ENCODE measurements at regions of chr11 and their contacts with region 1.

Region 1: DNA sequence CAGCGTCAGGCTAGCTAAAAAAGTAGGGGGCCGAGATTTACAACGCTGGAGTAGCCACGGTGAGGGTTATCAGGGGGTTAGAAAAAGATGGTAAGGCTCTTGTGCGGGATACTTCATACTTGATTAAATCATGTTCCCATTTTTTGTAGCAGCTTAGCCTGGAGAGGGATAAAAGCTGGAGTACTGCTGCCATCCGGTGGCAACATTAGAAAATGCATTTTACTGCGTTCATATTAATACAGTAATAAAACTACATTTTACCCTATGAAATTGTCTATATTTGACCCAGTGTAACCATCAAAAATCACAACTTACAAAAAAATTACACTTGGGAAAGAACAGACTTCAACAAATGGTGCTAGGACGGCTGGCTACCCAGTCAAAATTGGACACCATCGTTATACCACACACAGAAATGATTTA is 17.3 kb downstream of the RPUSD4 start:
- DNase-seq: peak; percentile 80
- ATAC-seq: peak; percentile 71
- H3K4me3 ChIP-seq: no peak overlapping the region
- H3K27ac ChIP-seq: no peak overlapping the region
- H3K4me1 ChIP-seq: no peaks in the 10 kb centered on the region
- H3K27me3 ChIP-seq: no peaks in the 10 kb centered on the region
- CTCF ChIP-seq: peak; percentile 91

Region 2: DNA sequence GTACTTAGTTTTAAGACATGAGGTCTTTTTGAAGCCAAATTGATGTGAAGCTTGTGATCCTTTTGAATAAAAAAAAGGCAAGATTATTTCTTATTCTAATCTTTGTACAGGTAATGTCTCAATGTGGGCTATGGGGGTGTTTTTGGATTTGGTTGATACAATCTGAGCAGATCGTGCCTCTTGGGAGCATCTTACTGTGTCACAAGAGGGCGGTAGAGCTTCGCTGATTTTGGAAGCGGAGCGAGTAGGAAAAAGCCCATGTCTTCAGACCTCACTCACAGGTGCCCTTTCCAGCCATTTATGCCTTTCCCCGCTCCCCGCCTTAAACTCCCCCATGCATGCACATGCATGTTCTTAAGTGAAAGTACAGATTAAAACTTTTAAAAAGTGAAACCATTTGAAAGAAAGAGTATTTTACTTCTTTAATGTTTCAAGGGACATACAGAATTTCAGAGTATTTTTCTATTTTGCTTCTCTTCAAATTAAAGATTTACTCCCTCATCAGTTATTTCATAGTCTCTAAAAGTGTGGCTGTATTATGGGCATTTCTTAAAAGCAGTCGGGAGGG is 271.0 kb before region 1 on chr11:
- CTCF ChIA-PET with region 1: interaction called, 8 read pairs
- POLR2A ChIA-PET with region 1: no interaction called
- intact Hi-C with region 1: loop called (anchors 1 kb)
- DNase-seq: peak; percentile 94
- ATAC-seq: peak; percentile 86
- H3K4me3 ChIP-seq: no peak overlapping the region
- H3K27ac ChIP-seq: no peak overlapping the region
- H3K4me1 ChIP-seq: no peaks in the 10 kb centered on the region
- H3K27me3 ChIP-seq: peaks cover 6% of the 10 kb centered on the region; the same call in 1 of the 2 replicates
- CTCF ChIP-seq: peak; percentile 93

Region 3: GRCh38 chr11:125941619-125942611 is 252.2 kb before region 1 on chr11:
- CTCF ChIA-PET with region 1: interaction called, 3 read pairs
- POLR2A ChIA-PET with region 1: no interaction called
- intact Hi-C with region 1: loop called (anchors 1 kb)
- DNase-seq: peak; percentile 72
- ATAC-seq: peak; percentile 90
- H3K4me3 ChIP-seq: no peak overlapping the region
- H3K27ac ChIP-seq: no peak overlapping the region
- H3K4me1 ChIP-seq: peaks cover 6% of the 10 kb centered on the region; the same call in 1 of the 2 replicates
- H3K27me3 ChIP-seq: no peaks in the 10 kb centered on the region
- CTCF ChIP-seq: peak; percentile 96

Region 4: GRCh38 chr11:126115816-126116331 is 78.3 kb before region 1 on chr11:
- CTCF ChIA-PET with region 1: no interaction called
- POLR2A ChIA-PET with region 1: no interaction called
- intact Hi-C with region 1: loop called (anchors 1 kb)
- DNase-seq: peak; percentile 88
- ATAC-seq: peak; percentile 87
- H3K4me3 ChIP-seq: peak overlapping the region; percentile 40; the same call in 1 of the 2 replicates
- H3K27ac ChIP-seq: no peak overlapping the region
- H3K4me1 ChIP-seq: peaks cover 37% of the 10 kb centered on the region
- H3K27me3 ChIP-seq: no peaks in the 10 kb centered on the region
- CTCF ChIP-seq: peak; percentile 50

Region 5: DNA sequence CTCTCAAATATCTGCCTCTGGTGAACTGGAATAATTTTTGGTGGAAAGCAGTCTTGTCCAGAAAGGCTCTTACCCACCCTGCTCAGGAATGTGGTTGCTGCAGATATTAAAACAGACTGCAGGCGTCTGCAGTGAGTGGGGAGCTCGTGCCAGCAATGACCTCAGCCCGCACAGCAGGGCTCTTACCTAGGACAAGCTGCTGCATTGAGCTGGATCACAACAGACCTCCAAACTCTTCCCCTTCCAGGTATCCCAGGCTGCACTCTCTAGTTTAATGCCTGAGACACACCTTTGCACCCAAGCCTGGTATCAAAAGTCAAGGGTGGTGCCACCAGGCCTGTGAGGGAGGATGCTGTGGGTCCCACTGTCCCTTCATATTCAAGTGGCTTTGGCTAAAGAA is 61.8 kb before region 1 on chr11:
- CTCF ChIA-PET with region 1: no interaction called
- POLR2A ChIA-PET with region 1: no interaction called
- intact Hi-C with region 1: loop called (anchors 5 kb)
- DNase-seq: peak; percentile 84
- ATAC-seq: peak; percentile 98
- H3K4me3 ChIP-seq: no peak overlapping the region
- H3K27ac ChIP-seq: no peak overlapping the region
- H3K4me1 ChIP-seq: peaks cover 11% of the 10 kb centered on the region
- H3K27me3 ChIP-seq: peaks cover 3% of the 10 kb centered on the region; the same call in 1 of the 2 replicates
- CTCF ChIP-seq: no peak

Region 6: DNA sequence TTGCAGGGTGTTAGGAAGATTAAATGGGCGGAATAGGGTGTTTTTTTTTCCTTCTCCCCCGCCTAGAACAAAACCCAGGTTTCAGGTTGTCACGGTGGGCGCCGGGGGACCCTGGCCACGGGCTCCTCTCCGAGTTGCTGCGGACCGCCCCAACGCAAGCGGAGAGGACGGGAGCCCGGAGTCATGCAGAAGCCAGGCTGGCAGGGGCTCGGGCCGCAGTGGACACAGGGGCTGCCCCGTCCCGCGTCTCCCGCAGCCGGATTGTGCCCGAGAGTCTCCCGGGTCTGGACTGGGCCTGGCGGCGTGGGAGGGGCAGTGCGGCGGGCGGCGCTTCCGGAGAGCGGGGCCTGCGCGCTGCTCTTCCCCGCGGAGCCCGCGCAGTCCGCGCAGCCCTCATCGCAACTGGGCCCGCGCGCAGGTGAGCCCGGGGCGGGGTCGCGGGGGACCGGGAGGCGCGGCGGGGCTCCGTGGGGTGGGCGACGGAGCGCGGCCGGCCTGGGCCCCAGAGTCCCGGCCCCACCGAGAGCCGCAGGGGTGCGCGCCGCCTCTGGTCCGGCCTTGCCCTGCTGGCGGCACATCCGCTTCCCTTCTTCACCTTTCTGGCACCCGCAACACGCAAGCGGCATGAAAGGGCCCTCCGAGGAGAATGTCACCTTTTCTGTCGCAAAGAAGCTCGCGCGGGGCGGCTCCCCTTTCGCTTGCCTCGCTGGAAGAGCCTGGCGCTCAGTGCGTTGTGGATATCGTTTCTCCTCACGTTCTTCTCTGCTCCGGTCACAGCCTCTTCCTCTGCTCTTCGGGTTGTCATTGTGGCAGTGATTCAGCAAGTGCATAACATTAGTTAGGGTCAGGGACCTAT is 88.8 kb after region 1 on chr11 and contains the start of gene TIRAP:
- CTCF ChIA-PET with region 1: no interaction called
- POLR2A ChIA-PET with region 1: no interaction called
- intact Hi-C with region 1: no loop called
- DNase-seq: peak; percentile 59
- ATAC-seq: peak; percentile 74
- H3K4me3 ChIP-seq: peak within 1 kb of the TSS; percentile 82
- H3K27ac ChIP-seq: peak within 1 kb of the TSS; percentile 84
- H3K4me1 ChIP-seq: peaks cover 30% of the 10 kb centered on the region; the same call in 1 of the 2 replicates
- H3K27me3 ChIP-seq: no peaks in the 10 kb centered on the region
- CTCF ChIP-seq: no peak
- total RNA-seq, gene TIRAP: 8.4 and 12.1 TPM in 2 replicates